Esophagus squamous epithelium (tissue), 5 donors: ENCODE measurements at regions of chr11 and their contacts with region 1.

Region 1: DNA sequence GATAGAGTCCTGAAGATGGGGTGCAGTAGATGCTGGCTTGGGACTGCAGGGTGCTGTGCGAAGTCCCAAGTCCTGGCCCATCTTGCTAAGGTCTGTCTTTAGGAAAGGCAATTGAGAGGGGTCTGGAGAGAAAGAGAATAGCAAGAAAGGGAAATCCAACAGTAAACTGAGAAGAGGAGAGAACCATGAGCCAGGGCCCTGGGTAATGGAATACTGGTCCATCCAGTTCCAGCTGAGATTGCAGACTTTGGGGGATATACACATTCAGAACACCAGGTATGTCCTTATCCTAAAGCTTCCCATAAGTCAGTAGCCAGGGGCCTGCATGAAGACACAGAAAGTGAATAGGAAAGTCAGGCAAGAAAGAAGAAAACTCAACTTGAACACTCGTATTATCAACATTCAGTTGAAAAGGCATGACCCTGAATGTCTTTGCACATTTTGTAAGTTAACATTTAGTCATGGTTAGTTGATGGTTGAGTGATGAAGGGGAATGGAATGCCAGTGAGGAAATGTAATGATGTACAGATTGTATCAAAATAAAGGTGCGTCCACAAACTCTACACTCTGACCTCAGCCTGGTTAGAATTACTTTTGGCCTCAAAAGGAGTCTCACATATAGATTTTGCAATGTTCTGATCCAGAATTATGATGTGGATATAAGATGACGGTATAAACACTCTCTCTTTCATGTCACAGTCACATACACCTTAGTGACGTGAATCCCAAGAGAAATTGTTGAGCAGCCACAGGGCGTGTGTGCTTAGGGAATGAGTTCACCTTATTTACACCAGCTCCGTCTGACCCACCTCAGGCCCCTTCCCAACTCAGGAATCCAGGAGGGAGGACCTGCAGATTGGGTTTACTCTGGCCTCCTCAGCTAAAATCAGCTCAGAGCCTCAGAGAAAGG is 100.3 kb downstream of the RDX start:
- DNase-seq: no peak
- H3K4me3 ChIP-seq: no peak overlapping the region
- H3K27ac ChIP-seq: peak overlapping the region in 1 of 4 donors; percentile 1
- H3K4me1 ChIP-seq: peaks cover 0 to 22% (median 0%) of the 10 kb centered on the region in 3 donors
- H3K27me3 ChIP-seq: no peaks in the 10 kb centered on the region
- CTCF ChIP-seq: no peak
- POLR2A ChIP-seq: no peak

Region 2: GRCh38 chr11:110141812-110142211 is 54.3 kb before region 1 on chr11:
- intact Hi-C with region 1: no loop called
- DNase-seq: no peak
- H3K4me3 ChIP-seq: no peak overlapping the region
- H3K27ac ChIP-seq: no peak overlapping the region
- H3K4me1 ChIP-seq: peaks cover 0 to 5% (median 0%) of the 10 kb centered on the region in 3 donors
- H3K27me3 ChIP-seq: no peaks in the 10 kb centered on the region
- CTCF ChIP-seq: no peak
- POLR2A ChIP-seq: no peak

Region 3: GRCh38 chr11:110366291-110366690 is 170.2 kb after region 1 on chr11:
- intact Hi-C with region 1: loop called (anchors 5 kb)
- DNase-seq: no peak
- H3K4me3 ChIP-seq: no peak overlapping the region
- H3K27ac ChIP-seq: no peak overlapping the region
- H3K4me1 ChIP-seq: peaks cover 0 to 18% (median 4%) of the 10 kb centered on the region in 3 donors
- H3K27me3 ChIP-seq: no peaks in the 10 kb centered on the region
- CTCF ChIP-seq: no peak
- POLR2A ChIP-seq: no peak

Region 4: GRCh38 chr11:110429731-110430266 is 233.7 kb after region 1 on chr11 and contains the start of gene FDX1:
- intact Hi-C with region 1: loop called (anchors 5 kb)
- DNase-seq: no peak
- H3K4me3 ChIP-seq: peak within 1 kb of the TSS; percentile 75 to 90 (median 84)
- H3K27ac ChIP-seq: peak within 1 kb of the TSS; percentile 93 to 96 (median 94)
- H3K4me1 ChIP-seq: peaks cover 14 to 50% (median 19%) of the 10 kb centered on the region in 3 donors
- H3K27me3 ChIP-seq: no peaks in the 10 kb centered on the region
- CTCF ChIP-seq: peak; percentile 25 to 88 (median 68)
- POLR2A ChIP-seq: peak in 2 of 4 donors; percentile 70 to 74
- total RNA-seq, gene FDX1: 13.7 to 22.2 (median 17.5) TPM

Region 5: GRCh38 chr11:110704210-110704864 is 508.2 kb after region 1 on chr11:
- intact Hi-C with region 1: no loop called
- DNase-seq: no peak
- H3K4me3 ChIP-seq: no peak overlapping the region
- H3K27ac ChIP-seq: no peak overlapping the region
- H3K4me1 ChIP-seq: peaks cover 0 to 7% (median 0%) of the 10 kb centered on the region in 3 donors
- H3K27me3 ChIP-seq: no peaks in the 10 kb centered on the region
- CTCF ChIP-seq: no peak
- POLR2A ChIP-seq: no peak